ENCODE measurements at regions of chr9 and their contacts with region 1.

Region 1: GRCh38 chr9:87324613-87325194 is 173.0 kb upstream of the DAPK1 start:
- DNase-seq: peak; percentile 20
- ATAC-seq: no peak; the same call in 1 of the 2 replicates
- H3K4me3 ChIP-seq: no peak overlapping the region
- H3K27ac ChIP-seq: no peak overlapping the region
- H3K4me1 ChIP-seq: no peaks in the 10 kb centered on the region
- H3K27me3 ChIP-seq: no peaks in the 10 kb centered on the region
- CTCF ChIP-seq: peak; percentile 59; the same call in 1 of the 2 replicates

Region 2: GRCh38 chr9:86413966-86414880 is 910.5 kb before region 1 on chr9:
- CTCF ChIA-PET with region 1: no interaction called
- POLR2A ChIA-PET with region 1: no interaction called
- in situ Hi-C with region 1: no loop called
- intact Hi-C with region 1: loop called (anchors 5 kb)
- DNase-seq: no peak
- ATAC-seq: 0 out of 2 replicates have a peak, but pooled peaks have one; percentile 51
- H3K4me3 ChIP-seq: no peak overlapping the region
- H3K27ac ChIP-seq: no peak overlapping the region
- H3K4me1 ChIP-seq: no peaks in the 10 kb centered on the region
- H3K27me3 ChIP-seq: no peaks in the 10 kb centered on the region
- CTCF ChIP-seq: peak; percentile 65; the same call in 1 of the 2 replicates

Region 3: GRCh38 chr9:86434039-86434726 is 890.5 kb before region 1 on chr9:
- CTCF ChIA-PET with region 1: no interaction called
- POLR2A ChIA-PET with region 1: no interaction called
- in situ Hi-C with region 1: no loop called
- intact Hi-C with region 1: loop called (anchors 2 kb)
- DNase-seq: no peak
- ATAC-seq: no peak
- H3K4me3 ChIP-seq: no peak overlapping the region
- H3K27ac ChIP-seq: no peak overlapping the region
- H3K4me1 ChIP-seq: no peaks in the 10 kb centered on the region
- H3K27me3 ChIP-seq: no peaks in the 10 kb centered on the region
- CTCF ChIP-seq: peak; percentile 74; the same call in 1 of the 2 replicates

Region 4: GRCh38 chr9:86486891-86487837 is 837.5 kb before region 1 on chr9:
- CTCF ChIA-PET with region 1: no interaction called
- POLR2A ChIA-PET with region 1: no interaction called
- in situ Hi-C with region 1: no loop called
- intact Hi-C with region 1: loop called (anchors 5 kb)
- DNase-seq: peak; percentile 4
- ATAC-seq: no peak
- H3K4me3 ChIP-seq: no peak overlapping the region
- H3K27ac ChIP-seq: no peak overlapping the region
- H3K4me1 ChIP-seq: no peaks in the 10 kb centered on the region
- H3K27me3 ChIP-seq: no peaks in the 10 kb centered on the region
- CTCF ChIP-seq: peak; percentile 50; the same call in 1 of the 2 replicates

Region 5: GRCh38 chr9:86948074-86948929 is 376.4 kb before region 1 on chr9:
- CTCF ChIA-PET with region 1: no interaction called
- POLR2A ChIA-PET with region 1: no interaction called
- in situ Hi-C with region 1: no loop called
- intact Hi-C with region 1: loop called (anchors 10 kb)
- DNase-seq: peak; percentile 28
- ATAC-seq: peak; percentile 70
- H3K4me3 ChIP-seq: peak overlapping the region; percentile 49 to 55
- H3K27ac ChIP-seq: no peak overlapping the region
- H3K4me1 ChIP-seq: no peaks in the 10 kb centered on the region
- H3K27me3 ChIP-seq: peaks cover 11% of the 10 kb centered on the region
- CTCF ChIP-seq: peak; percentile 79

Region 6: DNA sequence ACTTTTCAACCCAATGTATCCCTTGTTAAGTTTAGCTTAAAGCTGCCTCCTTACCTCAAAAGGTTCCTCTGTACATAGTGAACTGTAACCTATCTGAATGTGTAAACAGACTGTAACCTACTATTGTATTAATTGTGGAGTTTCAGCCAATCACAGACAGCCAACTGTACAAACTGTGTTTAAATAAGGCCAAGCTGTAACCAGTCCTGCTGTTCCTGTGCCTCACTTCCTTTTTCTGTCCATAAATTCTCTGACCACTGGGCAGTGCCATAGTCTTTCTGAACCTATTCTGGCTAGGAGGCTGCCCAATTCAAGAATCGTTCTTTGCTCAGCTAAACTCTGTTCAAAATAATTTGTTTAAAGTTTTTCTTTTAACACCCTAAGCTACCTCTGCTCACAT is 98.3 kb after region 1 on chr9:
- CTCF ChIA-PET with region 1: no interaction called
- POLR2A ChIA-PET with region 1: no interaction called
- in situ Hi-C with region 1: no loop called
- intact Hi-C with region 1: no loop called
- DNase-seq: no peak
- ATAC-seq: no peak
- H3K4me3 ChIP-seq: no peak overlapping the region
- H3K27ac ChIP-seq: no peak overlapping the region
- H3K4me1 ChIP-seq: no peaks in the 10 kb centered on the region
- H3K27me3 ChIP-seq: no peaks in the 10 kb centered on the region
- CTCF ChIP-seq: no peak

Region 7: DNA sequence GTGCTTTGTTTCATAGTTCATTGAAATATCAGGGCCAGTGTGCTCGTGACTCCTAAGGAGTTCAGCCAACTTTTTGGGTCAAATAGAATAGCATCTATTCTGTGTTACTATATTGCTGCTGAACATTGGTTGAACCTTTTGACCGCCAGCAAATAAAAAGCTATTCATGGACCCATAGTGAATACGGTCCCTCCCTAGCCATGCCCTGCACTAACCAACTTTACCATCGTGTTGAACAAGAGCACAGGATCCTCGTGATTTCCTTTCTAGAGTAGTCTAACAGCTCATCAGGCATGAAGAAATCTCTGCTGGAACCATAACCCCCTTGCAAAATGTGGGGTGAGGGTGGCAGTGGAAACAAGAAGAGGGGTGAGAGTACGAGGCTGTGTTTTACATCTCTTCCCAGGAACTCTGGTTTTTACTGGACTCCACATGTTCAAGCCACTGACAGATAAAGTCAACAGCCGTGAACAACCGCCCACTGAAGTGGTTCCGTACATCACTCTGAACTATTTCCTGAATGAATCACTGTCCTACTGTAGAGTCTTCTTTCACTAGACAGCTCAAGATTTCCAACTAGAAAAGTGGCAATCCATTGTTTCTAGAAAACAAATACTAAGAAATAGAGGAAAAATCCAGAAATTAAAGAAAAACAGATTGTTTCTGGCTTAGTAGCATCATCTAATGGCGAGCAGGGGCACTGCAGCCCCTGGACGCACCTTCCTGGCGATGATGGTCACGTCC is 487.8 kb after region 1 on chr9:
- CTCF ChIA-PET with region 1: interaction called, 10 read pairs
- POLR2A ChIA-PET with region 1: no interaction called
- in situ Hi-C with region 1: no loop called
- intact Hi-C with region 1: no loop called
- DNase-seq: no peak
- ATAC-seq: no peak
- H3K4me3 ChIP-seq: no peak overlapping the region
- H3K27ac ChIP-seq: no peak overlapping the region
- H3K4me1 ChIP-seq: no peaks in the 10 kb centered on the region
- H3K27me3 ChIP-seq: no peaks in the 10 kb centered on the region
- CTCF ChIP-seq: peak; percentile 93

Measured in Panc1 (cell line).